Activated naive CD4-positive, alpha-beta T cell treated with anti-CD3 and anti-CD28 coated beads, Interleukin-2, amount 10 ng/mL, durations not matched to agents 7 days and 5 days (primary cell): ENCODE measurements at regions of chr4 and their contacts with region 1.

Region 1: GRCh38 chr4:69881173-69881773 is 21.3 kb upstream of the SULT1E1 start:
- DNase-seq: peak; percentile 45
- H3K4me3 Mint-ChIP-seq: no peak overlapping the region
- H3K27ac Mint-ChIP-seq: no peak overlapping the region
- H3K4me1 Mint-ChIP-seq: no peaks in the 10 kb centered on the region
- H3K27me3 Mint-ChIP-seq: peaks cover 9% of the 10 kb centered on the region

Region 2: DNA sequence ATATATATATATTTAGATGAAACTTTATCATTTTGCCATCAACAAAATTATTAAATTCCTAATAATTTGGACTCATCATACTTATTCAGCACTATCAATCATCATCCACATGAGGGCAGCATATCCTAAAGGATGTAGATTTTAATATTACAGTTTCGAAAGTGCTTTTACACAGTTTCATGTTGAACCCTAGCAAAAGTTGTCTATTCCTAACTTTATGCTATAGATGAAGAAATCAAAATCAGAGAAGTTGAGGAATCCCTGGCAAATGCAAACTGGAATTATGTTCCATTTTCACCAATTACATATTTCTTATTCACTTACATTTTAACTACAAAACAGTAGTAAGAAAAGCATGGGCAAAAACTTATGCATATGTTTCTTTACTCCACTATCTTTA is 191.7 kb before region 1 on chr4:
- CTCF ChIA-PET with region 1: interaction called, 16 read pairs
- DNase-seq: no peak
- H3K4me3 Mint-ChIP-seq: no peak overlapping the region
- H3K27ac Mint-ChIP-seq: no peak overlapping the region
- H3K4me1 Mint-ChIP-seq: peaks cover 2% of the 10 kb centered on the region
- H3K27me3 Mint-ChIP-seq: no peaks in the 10 kb centered on the region

Region 3: DNA sequence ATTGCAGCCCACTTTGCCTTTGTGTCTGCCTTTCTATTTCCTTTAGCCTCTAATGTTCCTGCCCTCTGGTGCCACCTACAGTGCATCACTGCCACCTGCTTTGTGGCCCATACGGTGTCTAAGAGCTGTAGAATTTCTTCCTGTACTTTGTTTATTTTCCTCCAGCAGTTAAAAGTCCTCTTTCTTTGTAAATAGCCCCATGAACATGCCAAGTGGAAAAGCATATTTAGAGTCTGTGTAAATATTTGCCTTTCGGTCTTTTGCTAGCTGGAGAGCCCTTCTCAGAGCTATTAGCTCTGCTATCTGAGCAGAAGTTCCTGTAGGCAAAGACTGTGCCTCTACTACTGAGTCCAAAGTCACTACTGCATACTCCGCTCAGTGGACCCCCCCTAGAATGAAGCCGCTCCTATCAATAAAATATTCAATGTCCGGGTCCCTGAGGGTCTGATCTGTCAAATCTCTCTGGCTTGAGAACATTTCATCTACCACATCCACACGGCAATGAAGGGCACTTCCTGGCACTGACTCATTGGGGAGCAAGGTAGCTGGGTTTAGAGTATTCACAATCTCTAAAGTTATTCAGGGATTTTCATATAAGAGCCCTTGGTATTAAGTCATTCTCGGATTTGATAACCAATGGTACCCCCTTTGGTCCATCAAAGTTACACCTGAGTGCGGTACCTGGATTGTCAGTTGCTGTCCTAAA is 57.6 kb before region 1 on chr4:
- CTCF ChIA-PET with region 1: interaction called, 15 read pairs
- DNase-seq: peak; percentile 74
- H3K4me3 Mint-ChIP-seq: no peak overlapping the region
- H3K27ac Mint-ChIP-seq: no peak overlapping the region
- H3K4me1 Mint-ChIP-seq: peaks cover 4% of the 10 kb centered on the region
- H3K27me3 Mint-ChIP-seq: no peaks in the 10 kb centered on the region

Region 4: GRCh38 chr4:70059149-70059548 is 177.9 kb after region 1 on chr4:
- CTCF ChIA-PET with region 1: no interaction called
- DNase-seq: no peak
- H3K4me3 Mint-ChIP-seq: no peak overlapping the region
- H3K27ac Mint-ChIP-seq: no peak overlapping the region
- H3K4me1 Mint-ChIP-seq: no peaks in the 10 kb centered on the region
- H3K27me3 Mint-ChIP-seq: no peaks in the 10 kb centered on the region